Calu3 (cell line): ENCODE measurements at regions of chr12 and their contacts with region 1.

Region 1: GRCh38 chr12:61367281-61367785 is 892.9 kb upstream of the USP15 start:
- DNase-seq: no peak
- H3K4me3 Mint-ChIP-seq: no peak overlapping the region
- H3K27ac Mint-ChIP-seq: no peak overlapping the region
- H3K4me1 Mint-ChIP-seq: no peaks in the 10 kb centered on the region
- H3K27me3 Mint-ChIP-seq: no peaks in the 10 kb centered on the region
- CTCF ChIP-seq: no peak

Region 2: GRCh38 chr12:61452076-61452475 is 84.7 kb after region 1 on chr12:
- CTCF ChIA-PET with region 1: no interaction called
- intact Hi-C with region 1: loop called (anchors 5 kb)
- DNase-seq: peak; percentile 78
- H3K4me3 Mint-ChIP-seq: no peak overlapping the region
- H3K27ac Mint-ChIP-seq: peak overlapping the region; percentile 84
- H3K4me1 Mint-ChIP-seq: peaks cover 9% of the 10 kb centered on the region
- H3K27me3 Mint-ChIP-seq: no peaks in the 10 kb centered on the region
- CTCF ChIP-seq: no peak

Region 3: DNA sequence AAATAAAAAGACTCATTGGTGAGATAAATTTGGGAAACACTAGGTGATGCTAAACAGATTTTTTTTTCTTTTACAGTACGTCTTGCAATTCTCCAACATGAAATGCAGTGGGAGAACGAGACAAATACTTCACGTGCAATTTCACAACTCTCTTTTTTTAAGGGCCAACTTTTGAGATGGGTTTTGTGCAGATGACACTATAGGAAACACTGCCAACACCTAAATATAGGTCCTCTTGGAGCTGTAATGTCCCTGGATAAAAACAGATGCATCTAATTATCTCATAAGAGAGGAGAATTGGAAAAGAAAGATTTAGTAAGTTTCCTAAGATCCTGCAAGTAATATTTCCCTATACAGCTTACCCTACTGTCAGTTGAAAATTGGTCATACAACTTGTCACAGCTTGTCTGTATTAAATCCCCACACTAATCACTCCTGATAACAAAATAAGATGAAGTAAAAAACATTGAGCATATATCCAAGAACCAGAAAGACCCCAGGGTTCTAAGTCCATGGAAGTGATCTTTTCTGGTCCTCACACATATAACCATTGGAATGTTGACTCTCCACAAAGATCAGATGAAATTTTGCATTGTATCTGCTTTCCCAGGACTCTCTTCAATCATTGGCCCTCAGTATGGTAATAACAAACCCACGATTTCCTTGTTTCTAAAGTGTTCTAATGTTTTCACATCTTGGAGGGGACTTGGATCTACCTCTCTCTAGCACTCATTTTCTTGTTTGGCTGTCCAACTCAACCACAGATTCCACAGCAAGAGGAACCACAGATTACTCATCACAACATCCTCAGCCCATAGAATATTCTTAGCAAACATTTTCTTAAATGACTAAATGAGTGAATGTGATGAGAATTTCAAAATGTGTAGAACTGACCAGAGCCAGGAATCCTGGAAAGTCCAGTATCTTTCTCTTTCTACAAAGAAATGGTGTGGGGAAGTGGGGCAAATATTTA is 123.5 kb after region 1 on chr12:
- CTCF ChIA-PET with region 1: no interaction called
- intact Hi-C with region 1: no loop called
- DNase-seq: no peak
- H3K4me3 Mint-ChIP-seq: no peak overlapping the region
- H3K27ac Mint-ChIP-seq: no peak overlapping the region
- H3K4me1 Mint-ChIP-seq: peaks cover 8% of the 10 kb centered on the region
- H3K27me3 Mint-ChIP-seq: no peaks in the 10 kb centered on the region
- CTCF ChIP-seq: no peak